ENCODE measurements at regions of chr1 and their contacts with region 1.

Region 1: DNA sequence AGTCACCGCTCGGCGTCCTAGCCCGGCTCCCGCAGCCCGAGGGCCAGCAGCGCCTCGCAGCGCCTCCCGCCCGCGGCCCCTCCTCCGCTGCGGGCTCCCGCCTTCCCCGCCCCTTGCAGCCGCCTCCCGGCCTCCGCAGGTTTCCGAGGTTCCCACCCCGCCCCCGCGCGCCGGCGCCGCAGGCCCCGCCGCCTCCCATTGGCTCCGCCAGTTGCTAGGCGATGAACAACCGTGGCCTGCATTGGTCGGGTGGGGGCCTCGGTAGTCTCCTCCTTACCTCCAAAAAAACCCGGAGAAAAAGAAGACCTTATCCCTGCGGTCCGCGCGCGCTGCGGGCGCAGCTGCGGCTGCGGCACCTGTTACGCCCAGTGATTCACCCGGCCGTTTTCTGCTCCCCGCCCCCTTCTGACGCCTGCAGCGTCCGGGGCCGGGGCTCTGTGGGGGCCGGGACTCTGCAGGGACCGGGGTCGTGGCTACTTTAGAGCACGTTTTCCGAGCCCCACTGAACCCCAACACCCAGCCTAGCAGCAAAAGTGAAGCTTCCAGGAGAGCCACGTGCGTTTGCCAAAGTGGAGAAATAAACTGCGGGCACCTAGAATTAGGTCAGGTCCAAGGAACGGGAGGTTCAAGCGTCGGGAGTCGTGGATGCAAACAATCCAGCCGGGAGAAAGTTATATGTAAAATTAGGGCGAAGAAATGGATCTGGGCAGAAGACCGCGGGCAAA is at the start of gene SSX2IP:
- DNase-seq: peak; percentile 97
- ATAC-seq: peak; percentile 93
- H3K4me3 ChIP-seq: peak within 1 kb of the TSS; percentile 96
- H3K27ac ChIP-seq: peak within 1 kb of the TSS; percentile 80
- H3K4me1 ChIP-seq: peaks cover 4% of the 10 kb centered on the region
- H3K27me3 ChIP-seq: no peaks in the 10 kb centered on the region
- CTCF ChIP-seq: no peak
- POLR2A ChIP-seq: no peak
- RAD21 ChIP-seq: no peak
- total RNA-seq, gene SSX2IP: 13.4 and 22.8 TPM in 2 replicates

Region 2: GRCh38 chr1:84726593-84727499 is 36.3 kb after region 1 on chr1:
- CTCF ChIA-PET with region 1: no interaction called
- POLR2A ChIA-PET with region 1: no interaction called
- dilution Hi-C with region 1: no loop called
- in situ Hi-C with region 1: no loop called
- intact Hi-C with region 1: loop called (anchors 5 kb)
- DNase-seq: peak; percentile 66
- ATAC-seq: peak; percentile 70
- H3K4me3 ChIP-seq: no peak overlapping the region
- H3K27ac ChIP-seq: peak overlapping the region; percentile 86; the same call in 1 of the 2 replicates
- H3K4me1 ChIP-seq: peaks cover 3% of the 10 kb centered on the region
- H3K27me3 ChIP-seq: no peaks in the 10 kb centered on the region
- CTCF ChIP-seq: no peak
- POLR2A ChIP-seq: no peak
- RAD21 ChIP-seq: no peak